ENCODE measurements at regions of chr1 and their contacts with region 1.

Region 1: GRCh38 chr1:53754484-53755312 is 15.7 kb upstream of the GLIS1 start:
- DNase-seq: peak; percentile 82
- ATAC-seq: peak; percentile 88
- H3K4me3 ChIP-seq: no peak overlapping the region
- H3K27ac ChIP-seq: no peak overlapping the region
- H3K4me1 ChIP-seq: no peaks in the 10 kb centered on the region
- H3K27me3 ChIP-seq: no peaks in the 10 kb centered on the region
- CTCF ChIP-seq: peak; percentile 91

Region 2: DNA sequence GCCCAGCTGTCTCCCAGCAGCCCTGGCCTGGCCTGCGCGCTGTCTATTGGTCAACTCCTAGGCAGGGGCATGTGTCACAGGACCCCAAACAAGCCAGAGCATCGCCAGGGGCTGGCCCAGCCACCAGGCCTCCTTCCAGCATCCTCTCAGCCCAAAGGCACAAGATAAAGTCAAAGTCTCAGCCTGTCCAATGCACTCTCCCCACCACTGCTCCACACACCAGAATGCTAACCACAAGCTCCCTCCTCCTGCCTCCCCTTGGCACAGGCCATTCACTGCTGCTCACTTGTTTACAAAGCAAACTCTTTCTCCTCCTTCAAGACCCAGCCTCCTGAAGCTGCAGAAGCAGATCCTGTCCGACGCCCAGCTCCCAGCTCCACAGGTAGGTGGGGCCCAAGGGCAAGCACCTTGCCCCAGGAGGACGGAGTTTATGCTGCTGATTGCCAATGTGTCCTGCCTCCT is 162.1 kb before region 1 on chr1:
- CTCF ChIA-PET with region 1: interaction called, 3 read pairs
- POLR2A ChIA-PET with region 1: interaction called, 24 read pairs
- intact Hi-C with region 1: no loop called
- DNase-seq: peak; percentile 76
- ATAC-seq: peak; percentile 97
- H3K4me3 ChIP-seq: no peak overlapping the region
- H3K27ac ChIP-seq: no peak overlapping the region
- H3K4me1 ChIP-seq: peaks cover 4% of the 10 kb centered on the region; the same call in 1 of the 2 replicates
- H3K27me3 ChIP-seq: no peaks in the 10 kb centered on the region
- CTCF ChIP-seq: peak; percentile 56

Region 3: GRCh38 chr1:53681977-53682685 is 72.6 kb before region 1 on chr1:
- CTCF ChIA-PET with region 1: interaction called, 7 read pairs
- POLR2A ChIA-PET with region 1: no interaction called
- intact Hi-C with region 1: loop called (anchors 2 kb)
- DNase-seq: peak; percentile 71
- ATAC-seq: peak; percentile 87
- H3K4me3 ChIP-seq: no peak overlapping the region
- H3K27ac ChIP-seq: no peak overlapping the region
- H3K4me1 ChIP-seq: no peaks in the 10 kb centered on the region
- H3K27me3 ChIP-seq: no peaks in the 10 kb centered on the region
- CTCF ChIP-seq: peak; percentile 86

Region 4: GRCh38 chr1:53718443-53718842 is 36.3 kb before region 1 on chr1:
- CTCF ChIA-PET with region 1: no interaction called
- POLR2A ChIA-PET with region 1: no interaction called
- intact Hi-C with region 1: loop called (anchors 1 kb)
- DNase-seq: no peak
- ATAC-seq: peak; percentile 46
- H3K4me3 ChIP-seq: no peak overlapping the region
- H3K27ac ChIP-seq: no peak overlapping the region
- H3K4me1 ChIP-seq: no peaks in the 10 kb centered on the region
- H3K27me3 ChIP-seq: no peaks in the 10 kb centered on the region
- CTCF ChIP-seq: no peak